ENCODE measurements at regions of chr22 and their contacts with region 1.

Region 1: DNA sequence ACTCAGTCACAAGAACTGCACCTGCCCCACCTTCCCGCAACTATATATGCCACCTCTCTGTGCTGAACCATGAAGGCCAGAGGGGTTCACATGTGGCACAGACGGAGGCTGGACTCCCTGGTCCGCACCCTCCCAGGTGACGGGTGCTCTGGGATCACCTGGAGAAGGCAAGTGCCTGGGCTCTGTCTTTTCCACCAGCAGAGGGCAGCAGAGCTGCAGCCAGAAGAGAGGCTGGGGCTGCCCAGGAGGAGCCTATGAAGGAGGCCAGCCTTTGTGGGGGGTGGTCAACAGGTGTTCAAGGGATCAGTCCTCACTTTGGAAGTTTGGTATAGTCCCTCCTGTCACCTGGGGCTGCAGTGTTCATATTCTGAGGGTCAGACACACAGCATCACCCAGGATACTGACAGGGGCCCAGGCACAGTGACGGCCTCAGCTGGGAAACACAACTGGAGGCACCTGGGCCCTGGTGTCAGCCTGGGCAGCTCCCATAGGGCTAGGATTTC is 39.2 kb upstream of the IGLL5 start:
- DNase-seq: no peak
- ATAC-seq: peak; percentile 91
- H3K4me3 ChIP-seq: no peak overlapping the region
- H3K27ac ChIP-seq: no peak overlapping the region
- H3K4me1 ChIP-seq: peaks cover 18% of the 10 kb centered on the region
- H3K27me3 ChIP-seq: no peaks in the 10 kb centered on the region
- CTCF ChIP-seq: peak; percentile 49 to 79 (median 78)
- EP300 ChIP-seq: no peak
- POLR2A ChIP-seq: no peak
- RAD21 ChIP-seq: no peak

Region 2: GRCh38 chr22:22830193-22830592 is 18.2 kb before region 1 on chr22:
- CTCF ChIA-PET with region 1: interaction called, 13 read pairs
- POLR2A ChIA-PET with region 1: no interaction called
- RAD21 ChIA-PET with region 1: no interaction called
- SMC1A ChIA-PET with region 1: interaction called, 3 read pairs
- in situ Hi-C with region 1: no loop called
- intact Hi-C with region 1: no loop called
- DNase-seq: no peak
- ATAC-seq: no peak
- H3K4me3 ChIP-seq: no peak overlapping the region
- H3K27ac ChIP-seq: no peak overlapping the region
- H3K4me1 ChIP-seq: no peaks in the 10 kb centered on the region
- H3K27me3 ChIP-seq: no peaks in the 10 kb centered on the region
- CTCF ChIP-seq: no peak
- EP300 ChIP-seq: no peak
- POLR2A ChIP-seq: no peak
- RAD21 ChIP-seq: no peak

Region 3: GRCh38 chr22:22877523-22878210 is 29.3 kb after region 1 on chr22:
- CTCF ChIA-PET with region 1: no interaction called
- POLR2A ChIA-PET with region 1: no interaction called
- RAD21 ChIA-PET with region 1: no interaction called
- SMC1A ChIA-PET with region 1: no interaction called
- in situ Hi-C with region 1: no loop called
- intact Hi-C with region 1: no loop called
- DNase-seq: no peak
- ATAC-seq: no peak
- H3K4me3 ChIP-seq: no peak overlapping the region
- H3K27ac ChIP-seq: no peak overlapping the region
- H3K4me1 ChIP-seq: no peaks in the 10 kb centered on the region
- H3K27me3 ChIP-seq: no peaks in the 10 kb centered on the region
- CTCF ChIP-seq: no peak; a peak in 1 of 6 replicates
- EP300 ChIP-seq: no peak
- POLR2A ChIP-seq: no peak
- RAD21 ChIP-seq: no peak

Region 4: GRCh38 chr22:22913989-22914388 is 65.6 kb after region 1 on chr22:
- CTCF ChIA-PET with region 1: no interaction called
- POLR2A ChIA-PET with region 1: no interaction called
- RAD21 ChIA-PET with region 1: no interaction called
- SMC1A ChIA-PET with region 1: no interaction called
- in situ Hi-C with region 1: no loop called
- intact Hi-C with region 1: no loop called
- DNase-seq: no peak
- ATAC-seq: peak; percentile 61
- H3K4me3 ChIP-seq: no peak overlapping the region
- H3K27ac ChIP-seq: no peak overlapping the region
- H3K4me1 ChIP-seq: peaks cover 31% of the 10 kb centered on the region
- H3K27me3 ChIP-seq: no peaks in the 10 kb centered on the region
- CTCF ChIP-seq: no peak
- EP300 ChIP-seq: no peak
- POLR2A ChIP-seq: no peak
- RAD21 ChIP-seq: no peak

Region 5: DNA sequence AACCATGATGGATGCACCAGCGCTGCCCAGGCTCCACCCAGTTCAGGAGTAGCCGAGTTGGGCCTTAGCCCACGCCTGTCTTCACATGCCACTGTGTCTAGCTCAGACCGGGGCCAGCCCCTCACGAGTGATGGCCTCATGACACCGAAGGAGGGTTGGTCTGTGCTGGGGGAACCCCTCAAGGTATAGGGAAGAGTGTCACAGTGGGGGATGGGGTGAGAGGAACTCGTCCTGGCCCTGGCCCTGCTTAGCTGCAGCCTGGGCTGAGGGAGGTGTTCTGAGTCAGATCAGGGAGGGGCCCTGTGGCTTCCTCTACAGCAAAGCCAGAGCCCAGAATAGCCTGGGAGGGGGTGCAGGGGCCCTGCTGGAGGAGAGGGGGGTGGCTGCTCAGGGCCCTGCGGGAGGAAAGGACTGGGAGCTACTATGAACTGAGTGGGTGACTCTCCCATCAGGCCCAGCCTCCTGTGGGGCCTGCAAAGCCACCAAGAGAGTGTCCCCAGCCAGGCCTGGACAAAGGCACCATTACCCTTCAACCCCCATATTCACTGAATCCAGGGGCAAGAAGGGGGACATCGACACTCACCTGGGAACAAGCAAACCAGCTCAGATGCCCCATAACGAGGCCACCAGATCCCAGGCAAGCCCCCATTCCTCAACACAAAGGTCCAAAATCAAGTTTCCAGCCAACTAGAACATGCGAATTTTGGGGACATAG is 80.4 kb after region 1 on chr22:
- CTCF ChIA-PET with region 1: interaction called, 551 read pairs
- POLR2A ChIA-PET with region 1: interaction called, 38 read pairs
- RAD21 ChIA-PET with region 1: interaction called, 137 read pairs
- SMC1A ChIA-PET with region 1: interaction called, 40 read pairs
- in situ Hi-C with region 1: no loop called
- intact Hi-C with region 1: no loop called
- DNase-seq: peak; percentile 99
- ATAC-seq: peak; percentile 87
- H3K4me3 ChIP-seq: peak overlapping the region; percentile 14; the same call in 1 of the 2 replicates
- H3K27ac ChIP-seq: peak overlapping the region; percentile 99
- H3K4me1 ChIP-seq: peaks cover 81% of the 10 kb centered on the region
- H3K27me3 ChIP-seq: no peaks in the 10 kb centered on the region
- CTCF ChIP-seq: no peak
- EP300 ChIP-seq: peak; percentile 86 to 89; a peak in 3 of 4 replicates
- POLR2A ChIP-seq: peak; percentile 88
- RAD21 ChIP-seq: peak; percentile 27; the same call in 1 of the 2 replicates

Region 6: DNA sequence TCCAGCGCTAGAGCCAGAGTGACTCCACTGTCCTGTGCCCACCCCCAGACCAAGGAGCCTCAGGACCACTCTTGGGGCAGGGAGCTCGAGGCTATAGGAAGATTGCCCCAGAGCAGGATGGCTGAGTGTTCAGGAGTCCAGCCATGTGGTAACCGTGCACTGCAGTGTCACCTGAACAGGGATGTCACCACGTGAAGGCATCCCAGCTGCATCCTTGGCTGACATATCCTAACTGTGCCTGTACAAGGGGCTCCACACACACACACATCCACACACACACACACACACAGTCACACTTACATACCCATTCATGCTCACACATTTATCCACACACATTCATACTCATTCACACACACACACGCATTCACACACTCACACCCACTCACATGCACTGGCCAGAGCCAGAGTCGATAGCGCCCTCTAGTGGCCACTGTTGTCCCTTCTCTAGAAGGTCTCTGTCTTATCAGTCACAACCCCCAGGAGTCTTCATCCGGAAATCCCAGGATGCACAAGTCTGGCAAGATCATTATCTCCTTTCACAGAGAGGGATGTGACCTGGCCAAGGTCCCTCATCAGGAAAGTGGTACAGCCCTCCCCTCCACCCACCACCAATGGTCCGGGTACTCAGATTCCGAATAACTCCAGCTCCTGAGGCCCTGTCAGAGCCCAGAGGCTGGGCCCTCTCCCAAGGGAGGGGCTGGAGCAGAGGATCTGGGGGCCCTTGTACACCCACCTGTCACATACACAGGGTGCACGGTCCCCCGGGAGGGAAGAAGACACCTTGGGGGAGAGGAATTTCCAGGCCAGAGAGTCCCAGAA is 94.3 kb after region 1 on chr22:
- CTCF ChIA-PET with region 1: interaction called, 551 read pairs
- POLR2A ChIA-PET with region 1: interaction called, 22 read pairs
- RAD21 ChIA-PET with region 1: interaction called, 137 read pairs
- SMC1A ChIA-PET with region 1: interaction called, 141 read pairs
- in situ Hi-C with region 1: loop called (anchors 5 kb)
- intact Hi-C with region 1: loop called (anchors 1 kb)
- DNase-seq: peak; percentile 78
- ATAC-seq: peak; percentile 89
- H3K4me3 ChIP-seq: no peak overlapping the region
- H3K27ac ChIP-seq: peak overlapping the region; percentile 92
- H3K4me1 ChIP-seq: peaks cover 90% of the 10 kb centered on the region
- H3K27me3 ChIP-seq: no peaks in the 10 kb centered on the region
- CTCF ChIP-seq: peak; percentile 84 to 96 (median 87)
- EP300 ChIP-seq: 0 out of 4 replicates have a peak, but pooled peaks of 1 of the 2 experiments have one; percentile 61
- POLR2A ChIP-seq: no peak; the same call in 1 of the 2 replicates
- RAD21 ChIP-seq: peak; percentile 94

Region 7: GRCh38 chr22:23072035-23072910 is 223.9 kb after region 1 on chr22:
- CTCF ChIA-PET with region 1: no interaction called
- POLR2A ChIA-PET with region 1: no interaction called
- RAD21 ChIA-PET with region 1: no interaction called
- SMC1A ChIA-PET with region 1: no interaction called
- in situ Hi-C with region 1: no loop called
- intact Hi-C with region 1: no loop called
- DNase-seq: no peak
- ATAC-seq: no peak
- H3K4me3 ChIP-seq: no peak overlapping the region
- H3K27ac ChIP-seq: no peak overlapping the region
- H3K4me1 ChIP-seq: peaks cover 3% of the 10 kb centered on the region; the same call in 1 of the 2 replicates
- H3K27me3 ChIP-seq: peaks cover 0 to 9% of the 10 kb centered on the region in 2 experiments; a peak in 2 of 4 replicates
- CTCF ChIP-seq: no peak
- EP300 ChIP-seq: no peak
- POLR2A ChIP-seq: no peak
- RAD21 ChIP-seq: no peak

Region 8: DNA sequence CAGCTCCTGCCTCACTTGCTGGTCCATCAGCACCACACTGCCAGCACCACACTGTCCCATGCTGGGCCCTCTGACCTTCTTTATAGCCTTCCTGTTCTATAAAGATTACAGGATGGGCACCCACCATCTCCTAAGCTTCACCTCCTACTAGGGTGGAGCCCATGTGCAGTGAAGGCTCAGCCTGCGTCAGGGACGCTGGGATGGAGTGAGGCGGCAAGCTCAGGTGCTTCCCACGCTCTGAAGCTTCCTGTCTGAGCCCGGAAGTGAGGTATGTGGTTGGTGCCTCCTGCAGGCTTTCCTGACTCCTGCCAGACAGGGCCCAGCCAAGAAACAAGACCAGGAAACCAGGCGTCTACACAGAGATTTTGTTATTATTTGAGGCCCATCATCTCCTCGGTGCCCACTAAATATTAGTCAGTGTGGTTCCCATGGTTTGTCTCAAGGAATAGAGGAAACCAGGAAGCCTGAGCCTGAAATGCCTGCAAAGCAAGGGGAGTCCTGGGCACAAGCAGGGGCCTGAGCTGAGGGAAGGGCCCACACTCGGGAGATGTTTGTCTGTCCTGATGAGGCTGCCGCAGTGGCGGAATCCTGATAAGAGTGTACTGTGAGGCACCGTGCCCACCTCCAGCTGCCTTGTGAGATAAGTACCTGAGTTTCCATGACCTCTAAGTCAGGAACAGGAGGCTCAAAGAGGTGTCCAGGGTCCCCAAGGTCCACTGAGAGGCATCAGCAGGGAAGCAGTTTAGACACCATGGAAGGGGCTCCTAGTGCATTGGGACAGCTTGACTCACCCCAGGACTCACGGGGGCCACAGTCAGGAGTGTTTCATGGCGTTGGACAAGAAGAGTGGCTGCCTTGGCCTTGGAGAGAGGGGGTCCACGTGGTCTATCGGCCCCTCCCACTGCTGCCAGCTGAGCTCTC is 271.3 kb after region 1 on chr22:
- CTCF ChIA-PET with region 1: no interaction called
- POLR2A ChIA-PET with region 1: no interaction called
- RAD21 ChIA-PET with region 1: no interaction called
- SMC1A ChIA-PET with region 1: no interaction called
- in situ Hi-C with region 1: loop called (anchors 5 kb)
- intact Hi-C with region 1: loop called (anchors 10 kb)
- DNase-seq: no peak
- ATAC-seq: peak; percentile 56
- H3K4me3 ChIP-seq: no peak overlapping the region
- H3K27ac ChIP-seq: no peak overlapping the region
- H3K4me1 ChIP-seq: no peaks in the 10 kb centered on the region
- H3K27me3 ChIP-seq: no peaks in the 10 kb centered on the region
- CTCF ChIP-seq: no peak
- EP300 ChIP-seq: no peak
- POLR2A ChIP-seq: no peak
- RAD21 ChIP-seq: no peak

Measured in GM12878 (cell line).